AG04449 (cell line): ENCODE measurements at regions of chr9 and their contacts with region 1.

Region 1: GRCh38 chr9:21434202-21435014 is 5.8 kb upstream of the IFNA1 start:
- DNase-seq: peak; percentile 23
- H3K4me3 ChIP-seq: no peak overlapping the region
- CTCF ChIP-seq: peak; percentile 53

Region 2: GRCh38 chr9:21415492-21416267 is 18.7 kb before region 1 on chr9:
- CTCF ChIA-PET with region 1: interaction called, 59 read pairs
- POLR2A ChIA-PET with region 1: no interaction called
- DNase-seq: no peak
- H3K4me3 ChIP-seq: no peak overlapping the region
- CTCF ChIP-seq: no peak